CD14-positive monocyte (primary cell): ENCODE measurements at regions of chr10 and their contacts with region 1.

Region 1: GRCh38 chr10:119131512-119132240 is 27.8 kb downstream of the DENND10 start:
- DNase-seq: peak; percentile 64 to 81 (median 78)
- H3K4me3 ChIP-seq: peak overlapping the region in 2 of 3 experiments; percentile 34 to 72
- H3K4me3 Mint-ChIP-seq: peak overlapping the region; percentile 60 to 81
- H3K27ac ChIP-seq: peak overlapping the region; percentile 91 to 94
- H3K27ac Mint-ChIP-seq: peak overlapping the region; percentile 93 to 99 (median 95)
- H3K4me1 ChIP-seq: peaks cover 77 to 78% of the 10 kb centered on the region in 2 donors
- H3K4me1 Mint-ChIP-seq: peaks cover 74% of the 10 kb centered on the region
- H3K27me3 ChIP-seq: no peaks in the 10 kb centered on the region
- H3K27me3 Mint-ChIP-seq: peaks cover 0 to 2% (median 0%) of the 10 kb centered on the region in 3 donors
- CTCF ChIP-seq: no peak

Region 2: GRCh38 chr10:118983263-118983662 is 148.4 kb before region 1 on chr10:
- intact Hi-C with region 1: no loop called
- DNase-seq: no peak
- H3K4me3 ChIP-seq: no peak overlapping the region
- H3K4me3 Mint-ChIP-seq: no peak overlapping the region
- H3K27ac ChIP-seq: no peak overlapping the region
- H3K27ac Mint-ChIP-seq: no peak overlapping the region
- H3K4me1 ChIP-seq: no peaks in the 10 kb centered on the region
- H3K4me1 Mint-ChIP-seq: peaks cover 3% of the 10 kb centered on the region
- H3K27me3 ChIP-seq: no peaks in the 10 kb centered on the region
- H3K27me3 Mint-ChIP-seq: peaks cover 3 to 10% (median 8%) of the 10 kb centered on the region in 3 donors
- CTCF ChIP-seq: no peak

Region 3: GRCh38 chr10:118995739-118996138 is 135.9 kb before region 1 on chr10:
- intact Hi-C with region 1: no loop called
- DNase-seq: no peak
- H3K4me3 ChIP-seq: no peak overlapping the region
- H3K4me3 Mint-ChIP-seq: no peak overlapping the region
- H3K27ac ChIP-seq: no peak overlapping the region
- H3K27ac Mint-ChIP-seq: no peak overlapping the region
- H3K4me1 ChIP-seq: no peaks in the 10 kb centered on the region
- H3K4me1 Mint-ChIP-seq: no peaks in the 10 kb centered on the region
- H3K27me3 ChIP-seq: no peaks in the 10 kb centered on the region
- H3K27me3 Mint-ChIP-seq: peaks cover 10 to 24% (median 10%) of the 10 kb centered on the region in 3 donors
- CTCF ChIP-seq: no peak

Region 4: DNA sequence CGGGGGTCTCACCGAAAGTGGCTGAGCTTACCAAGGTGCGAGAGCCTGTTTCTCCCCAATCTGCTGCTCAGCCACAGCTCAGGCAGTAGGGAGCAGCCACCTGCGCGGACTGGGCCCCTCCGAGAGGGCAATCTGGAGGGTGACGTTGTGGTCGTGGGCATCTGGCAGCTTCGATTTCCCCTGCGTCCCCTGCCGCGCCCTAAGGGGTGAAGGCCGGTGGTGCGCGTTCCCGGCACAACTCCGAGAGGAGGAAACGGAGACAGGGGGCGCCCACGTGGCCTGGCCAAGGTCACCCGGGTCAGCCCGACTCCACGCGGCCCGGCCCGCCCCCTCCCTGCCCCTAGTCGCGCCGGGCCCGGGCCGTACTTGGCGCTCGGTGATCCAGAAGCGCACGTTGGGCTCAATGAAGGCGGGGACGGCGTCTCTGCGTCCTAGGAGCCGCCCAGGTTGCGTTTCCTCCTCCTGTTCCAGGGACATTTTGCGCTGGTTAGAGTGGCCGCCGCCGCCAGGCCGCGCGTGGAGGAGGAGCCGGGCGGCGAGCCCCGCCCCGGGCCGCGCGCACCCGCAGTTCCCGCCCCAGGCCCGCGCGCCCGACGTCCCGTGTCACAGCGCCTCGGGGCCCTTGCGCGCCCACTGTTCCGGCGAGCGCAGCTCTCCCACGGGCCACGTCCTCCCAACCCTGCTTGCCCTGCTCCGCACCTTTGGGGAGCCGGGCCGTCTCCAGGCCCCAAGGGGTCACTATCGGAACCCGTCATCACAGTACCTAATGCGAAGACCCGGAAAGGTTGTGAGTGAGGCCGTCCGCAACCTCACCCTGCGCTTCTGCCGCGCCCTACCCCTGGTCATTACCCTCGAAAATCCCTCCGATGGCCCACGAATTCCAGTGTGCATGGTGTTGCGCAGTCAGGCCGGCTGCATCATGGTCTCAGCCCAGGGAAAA is 33.8 kb after region 1 on chr10 and contains the start of gene SFXN4:
- intact Hi-C with region 1: loop called in 1 of 2 experiments (anchors 5 kb)
- DNase-seq: peak; percentile 63 to 67 (median 65)
- H3K4me3 ChIP-seq: peak within 1 kb of the TSS; percentile 38 to 83 (median 75)
- H3K4me3 Mint-ChIP-seq: peak within 1 kb of the TSS; percentile 85 to 94
- H3K27ac ChIP-seq: peak within 1 kb of the TSS; percentile 76 to 92
- H3K27ac Mint-ChIP-seq: peak within 1 kb of the TSS; percentile 88 to 95 (median 94)
- H3K4me1 ChIP-seq: peaks cover 22 to 28% of the 10 kb centered on the region in 2 donors
- H3K4me1 Mint-ChIP-seq: peaks cover 33% of the 10 kb centered on the region
- H3K27me3 ChIP-seq: no peaks in the 10 kb centered on the region
- H3K27me3 Mint-ChIP-seq: peaks cover 0 to 1% (median 0%) of the 10 kb centered on the region in 3 donors
- CTCF ChIP-seq: no peak
- polyA plus RNA-seq, gene SFXN4: 8.3 to 20.4 (median 18.3) TPM

Region 5: DNA sequence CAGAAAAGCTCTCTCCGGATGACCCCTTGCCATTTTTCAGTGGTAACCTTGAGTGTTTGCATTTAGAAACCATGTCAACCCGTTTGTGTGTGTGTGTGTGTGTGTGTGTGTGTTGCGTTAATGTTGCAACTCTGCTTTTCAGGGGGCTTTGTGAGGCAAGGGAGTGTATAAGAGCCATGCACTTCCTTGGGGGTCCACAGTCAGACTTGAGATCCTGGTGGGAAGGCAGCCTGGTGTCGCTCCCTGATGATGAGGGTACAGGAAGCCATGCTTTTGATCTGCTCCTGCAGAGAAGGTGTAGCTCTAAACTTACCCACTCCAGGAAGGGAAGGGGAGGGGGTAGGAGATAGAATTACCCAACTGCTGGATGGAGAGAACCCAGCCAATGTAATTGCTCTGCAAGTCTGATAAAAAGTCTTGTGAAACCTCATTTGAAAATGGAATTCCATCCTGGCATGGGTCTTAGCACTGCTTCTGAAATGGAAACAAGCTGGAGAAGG is 86.4 kb after region 1 on chr10:
- intact Hi-C with region 1: no loop called
- DNase-seq: no peak
- H3K4me3 ChIP-seq: no peak overlapping the region
- H3K4me3 Mint-ChIP-seq: no peak overlapping the region
- H3K27ac ChIP-seq: no peak overlapping the region
- H3K27ac Mint-ChIP-seq: peak overlapping the region in 1 of 7 donors; percentile 40
- H3K4me1 ChIP-seq: peaks cover 18 to 24% of the 10 kb centered on the region in 2 donors
- H3K4me1 Mint-ChIP-seq: peaks cover 37% of the 10 kb centered on the region
- H3K27me3 ChIP-seq: no peaks in the 10 kb centered on the region
- H3K27me3 Mint-ChIP-seq: peaks cover 2 to 4% (median 3%) of the 10 kb centered on the region in 3 donors
- CTCF ChIP-seq: no peak